Activated T-helper 2 cell treated with anti-CD3 and anti-CD28 coated beads, Interferon-gamma antibody, Interleukin-2, Interleukin-4, amounts not matched to agents 10 μg/mL and 5 μg/mL and 100 μg/mL, durations not matched to agents 14 hours and 24 hours and 36 hours (primary cell): ENCODE measurements at regions of chr1 and their contacts with region 1.

Region 1: DNA sequence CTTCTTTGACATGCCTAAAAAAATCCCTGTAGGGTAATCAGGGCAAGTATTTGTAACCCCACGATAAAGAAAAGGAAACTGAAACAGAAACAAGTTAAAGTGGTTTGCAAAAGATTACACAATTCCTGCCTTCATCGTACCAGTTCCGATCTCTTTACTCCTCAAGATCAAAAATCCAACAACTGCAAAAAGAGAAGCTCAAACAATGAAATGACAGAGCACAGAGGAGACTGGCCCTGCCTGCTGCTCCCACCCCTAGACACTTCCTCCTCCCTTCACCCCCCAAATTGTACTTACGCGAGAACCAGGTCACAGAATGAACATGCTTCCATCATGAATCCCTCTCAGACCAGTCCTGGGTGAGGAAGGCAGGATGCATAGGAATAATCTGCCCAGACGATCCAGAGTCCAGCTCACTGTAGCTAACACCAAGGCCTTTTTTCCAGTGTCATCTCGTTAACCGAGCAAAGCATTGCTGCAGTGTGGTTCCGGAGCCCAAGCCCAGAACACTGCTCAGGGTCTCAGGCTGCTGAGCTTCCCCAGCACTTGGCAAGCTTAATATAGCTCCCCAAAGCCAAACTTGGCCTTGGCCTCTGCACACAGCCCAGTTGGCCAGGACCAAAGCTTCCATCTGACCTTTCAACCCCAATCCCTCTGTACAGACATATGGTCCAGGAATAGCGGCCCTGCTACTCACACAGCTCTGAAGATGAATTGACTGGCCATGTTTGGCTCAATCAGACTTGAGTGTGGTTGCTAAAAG is 20.3 kb downstream of the RXRG start:
- DNase-seq: no peak
- H3K4me3 Mint-ChIP-seq: peak overlapping the region; percentile 72
- H3K27ac Mint-ChIP-seq: no peak overlapping the region
- H3K4me1 Mint-ChIP-seq: peaks cover 15% of the 10 kb centered on the region
- H3K27me3 Mint-ChIP-seq: peaks cover 12% of the 10 kb centered on the region

Region 2: DNA sequence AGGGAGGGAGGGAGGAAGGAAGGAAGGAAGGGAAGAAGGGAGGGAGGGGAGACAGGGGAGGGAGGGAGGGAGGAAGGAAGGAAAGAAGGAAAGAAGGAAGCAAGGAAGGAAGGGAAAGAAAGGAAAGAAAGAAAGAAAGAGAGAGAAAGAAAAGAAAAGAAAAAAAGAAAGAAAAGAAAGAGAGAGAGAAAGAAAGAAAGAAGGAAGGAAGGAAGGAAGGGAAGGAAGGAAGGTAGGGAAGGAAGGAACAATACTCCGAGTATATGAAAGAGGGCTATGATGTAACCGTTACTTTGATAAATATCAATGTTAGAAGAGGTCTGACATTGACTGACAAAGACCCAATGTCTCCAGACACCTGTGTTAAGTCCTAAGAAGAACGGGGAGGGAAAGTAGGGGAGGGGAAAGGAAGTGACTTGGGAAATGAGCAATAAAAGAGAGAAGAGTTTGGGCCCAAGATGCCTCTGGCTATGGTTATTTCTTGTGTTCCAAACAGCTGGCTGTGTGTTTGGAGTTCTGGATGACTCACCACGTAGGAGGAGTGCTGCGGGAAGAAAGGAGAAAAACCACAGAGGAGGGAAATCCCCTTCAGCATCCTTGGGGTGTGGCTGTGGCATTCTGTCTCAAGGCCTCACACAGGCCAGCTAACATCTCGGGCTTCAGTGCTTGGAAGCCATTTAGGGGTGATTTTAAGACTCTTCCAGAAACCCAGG is 57.3 kb after region 1 on chr1:
- intact Hi-C with region 1: loop called (anchors 10 kb)
- DNase-seq: no peak
- H3K4me3 Mint-ChIP-seq: no peak overlapping the region
- H3K27ac Mint-ChIP-seq: no peak overlapping the region
- H3K4me1 Mint-ChIP-seq: peaks cover 31% of the 10 kb centered on the region
- H3K27me3 Mint-ChIP-seq: peaks cover 15% of the 10 kb centered on the region